Aorta (tissue), 5 donors: ENCODE measurements at regions of chr14 and their contacts with region 1.

Region 1: DNA sequence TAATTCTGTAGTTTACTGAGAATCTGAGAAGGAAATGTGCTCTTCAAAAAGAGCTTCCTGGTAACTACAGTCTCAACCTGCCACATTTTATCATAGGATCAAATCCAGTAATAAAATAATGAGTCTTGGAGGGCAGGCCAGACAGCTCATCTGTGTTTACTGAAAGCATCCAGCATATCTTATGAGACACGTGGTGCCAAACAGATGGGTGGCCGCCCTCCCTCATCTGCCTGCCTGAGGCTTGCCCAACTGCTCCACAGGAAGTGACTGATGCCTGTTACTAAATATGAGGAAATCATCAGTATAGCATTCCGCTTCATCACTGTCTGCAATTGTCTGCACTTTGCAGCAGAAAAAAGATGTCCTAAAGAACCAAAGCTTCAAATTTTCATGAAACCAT is 13.5 kb downstream of the DHRS7 start:
- DNase-seq: peak; percentile 81 to 85
- ATAC-seq: peak; percentile 75
- H3K4me3 ChIP-seq: no peak overlapping the region
- H3K27ac ChIP-seq: no peak overlapping the region
- H3K4me1 ChIP-seq: peaks cover 0 to 9% of the 10 kb centered on the region in 2 donors
- H3K27me3 ChIP-seq: no peaks in the 10 kb centered on the region

Region 2: GRCh38 chr14:60116181-60116580 is 35.5 kb before region 1 on chr14:
- intact Hi-C with region 1: loop called in 1 of 2 experiments (anchors 5 kb)
- DNase-seq: no peak
- ATAC-seq: no peak
- H3K4me3 ChIP-seq: no peak overlapping the region
- H3K27ac ChIP-seq: no peak overlapping the region
- H3K4me1 ChIP-seq: no peaks in the 10 kb centered on the region
- H3K27me3 ChIP-seq: no peaks in the 10 kb centered on the region

Region 3: GRCh38 chr14:60537663-60538062 is 385.9 kb after region 1 on chr14:
- intact Hi-C with region 1: no loop called
- DNase-seq: no peak
- ATAC-seq: no peak
- H3K4me3 ChIP-seq: no peak overlapping the region
- H3K27ac ChIP-seq: no peak overlapping the region
- H3K4me1 ChIP-seq: no peaks in the 10 kb centered on the region
- H3K27me3 ChIP-seq: peaks cover 0 to 2% of the 10 kb centered on the region in 2 donors